SK-N-SH (cell line): ENCODE measurements at regions of chr2 and their contacts with region 1.

Region 1: DNA sequence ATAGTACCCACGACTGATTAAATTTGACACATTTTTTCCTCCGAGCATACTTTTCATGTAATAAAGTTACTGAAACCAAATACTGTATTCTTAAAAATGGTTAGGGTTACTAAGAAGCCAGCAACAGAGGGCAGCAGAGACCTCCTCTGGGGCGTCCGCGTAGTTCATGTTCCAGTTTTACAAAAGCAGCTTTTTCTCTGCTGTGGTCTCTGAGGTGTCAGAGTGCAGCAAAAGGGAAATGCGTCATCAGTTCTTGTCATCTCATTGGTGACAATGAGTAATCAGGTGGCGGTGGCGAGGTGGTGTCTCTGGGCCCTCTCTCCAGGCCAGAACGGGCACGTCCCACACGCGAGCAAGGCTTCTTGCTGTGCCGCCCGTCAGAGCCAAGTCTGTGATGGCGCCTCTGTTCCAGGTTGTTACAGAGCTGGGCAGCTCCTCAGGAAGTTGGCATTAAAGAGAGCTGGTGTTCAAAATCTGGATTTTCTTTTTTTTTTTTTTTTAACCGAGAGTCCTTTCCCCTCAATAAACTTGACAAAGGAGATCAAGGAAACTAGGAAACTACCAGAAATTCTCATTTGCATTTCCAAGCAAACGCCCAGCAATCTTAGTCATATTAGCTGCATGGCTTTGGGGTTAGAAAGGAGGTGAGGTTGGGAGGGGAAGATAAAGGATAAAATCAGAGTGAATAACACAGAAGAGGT is 98.6 kb upstream of the BZW1 start:
- DNase-seq: peak; percentile 67
- H3K4me3 ChIP-seq: peak overlapping the region; percentile 37 to 38; a peak in 3 of 4 replicates
- H3K27ac ChIP-seq: peak overlapping the region; percentile 40 to 52
- H3K4me1 ChIP-seq: peaks cover 6 to 7% of the 10 kb centered on the region in 2 experiments; a peak in 3 of 4 replicates
- H3K27me3 ChIP-seq: no peaks in the 10 kb centered on the region
- CTCF ChIP-seq: peak; percentile 95
- EP300 ChIP-seq: no peak
- RAD21 ChIP-seq: peak; percentile 97

Region 2: GRCh38 chr2:200728630-200729029 is 15.5 kb after region 1 on chr2:
- CTCF ChIA-PET with region 1: interaction called, 230 read pairs
- POLR2A ChIA-PET with region 1: interaction called, 4 read pairs
- DNase-seq: no peak
- H3K4me3 ChIP-seq: no peak overlapping the region
- H3K27ac ChIP-seq: no peak overlapping the region
- H3K4me1 ChIP-seq: peaks cover 0 to 6% of the 10 kb centered on the region in 2 experiments; a peak in 1 of 4 replicates
- H3K27me3 ChIP-seq: no peaks in the 10 kb centered on the region
- CTCF ChIP-seq: no peak
- EP300 ChIP-seq: no peak
- RAD21 ChIP-seq: no peak

Region 3: GRCh38 chr2:200742426-200742825 is 29.3 kb after region 1 on chr2:
- CTCF ChIA-PET with region 1: interaction called, 230 read pairs
- POLR2A ChIA-PET with region 1: no interaction called
- DNase-seq: no peak
- H3K4me3 ChIP-seq: no peak overlapping the region
- H3K27ac ChIP-seq: no peak overlapping the region
- H3K4me1 ChIP-seq: peaks cover 0 to 10% of the 10 kb centered on the region in 2 experiments; a peak in 1 of 4 replicates
- H3K27me3 ChIP-seq: no peaks in the 10 kb centered on the region
- CTCF ChIP-seq: no peak
- EP300 ChIP-seq: no peak
- RAD21 ChIP-seq: no peak

Region 4: GRCh38 chr2:200811336-200812121 is 98.4 kb after region 1 on chr2 and contains the start of gene BZW1:
- CTCF ChIA-PET with region 1: interaction called, 18 read pairs
- POLR2A ChIA-PET with region 1: interaction called, 4 read pairs
- DNase-seq: peak; percentile 98
- H3K4me3 ChIP-seq: peak within 1 kb of the TSS; percentile 76 to 87
- H3K27ac ChIP-seq: peak within 1 kb of the TSS; percentile 98 to 100
- H3K4me1 ChIP-seq: peaks cover 12 to 20% of the 10 kb centered on the region in 2 experiments; a peak in 3 of 4 replicates
- H3K27me3 ChIP-seq: no peaks in the 10 kb centered on the region
- CTCF ChIP-seq: no peak
- EP300 ChIP-seq: no peak
- RAD21 ChIP-seq: no peak
- polyA plus RNA-seq, gene BZW1: 131 and 163 TPM in 2 replicates

Region 5: GRCh38 chr2:200963124-200963917 is 250.2 kb after region 1 on chr2 and contains the start of gene ORC2:
- CTCF ChIA-PET with region 1: no interaction called
- POLR2A ChIA-PET with region 1: no interaction called
- DNase-seq: peak; percentile 96
- H3K4me3 ChIP-seq: peak within 1 kb of the TSS; percentile 82 to 88
- H3K27ac ChIP-seq: peak within 1 kb of the TSS; percentile 75 to 82
- H3K4me1 ChIP-seq: peaks cover 11 to 12% of the 10 kb centered on the region in 2 experiments; a peak in 3 of 4 replicates
- H3K27me3 ChIP-seq: no peaks in the 10 kb centered on the region
- CTCF ChIP-seq: peak; percentile 72
- EP300 ChIP-seq: no peak
- RAD21 ChIP-seq: peak; percentile 45
- polyA plus RNA-seq, gene ORC2: 3.4 and 3.9 TPM in 2 replicates